ENCODE measurements at regions of chr9 and their contacts with region 1.

Region 1: DNA sequence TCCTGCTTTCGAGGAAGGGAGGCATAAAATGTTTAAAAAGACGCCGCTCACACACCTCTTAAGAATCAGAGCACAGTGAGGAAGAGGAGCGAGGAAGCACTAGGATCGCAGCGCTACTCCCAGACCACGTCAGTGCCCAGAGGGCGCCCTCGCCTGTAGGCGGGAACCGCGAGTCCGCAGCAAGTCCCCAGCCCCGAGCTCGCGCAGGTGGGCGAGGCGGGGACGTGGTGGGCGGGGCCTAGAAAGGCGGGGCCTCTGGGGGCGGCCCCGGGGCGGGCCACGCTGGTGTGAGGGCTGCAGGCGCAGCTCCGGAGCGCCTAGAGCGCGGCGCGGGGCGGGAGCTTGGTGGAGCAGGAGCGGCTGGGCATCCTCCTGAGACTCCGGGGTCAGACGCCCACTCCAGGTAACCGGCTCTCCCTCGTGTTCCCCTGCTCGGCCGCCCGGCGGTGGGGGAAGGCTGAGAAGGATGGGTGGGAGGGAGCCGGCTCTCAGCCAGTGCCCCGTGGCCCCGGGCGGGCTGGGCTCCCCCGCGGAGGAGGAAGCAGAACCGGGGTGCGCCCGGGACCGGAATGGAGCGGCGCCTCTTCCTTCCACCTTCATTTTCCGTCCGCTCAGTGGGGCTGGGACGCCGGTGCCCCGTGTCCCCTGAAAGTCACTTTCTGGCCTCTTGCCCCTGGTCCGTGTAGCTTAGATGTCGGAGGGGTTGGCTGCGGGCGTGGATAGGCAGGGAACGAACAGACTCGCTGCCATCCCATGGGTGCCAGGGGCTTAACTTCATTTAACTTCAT is at the start of gene GCNT1:
- DNase-seq: peak; percentile 95
- CTCF ChIP-seq: peak; percentile 57

Region 2: DNA sequence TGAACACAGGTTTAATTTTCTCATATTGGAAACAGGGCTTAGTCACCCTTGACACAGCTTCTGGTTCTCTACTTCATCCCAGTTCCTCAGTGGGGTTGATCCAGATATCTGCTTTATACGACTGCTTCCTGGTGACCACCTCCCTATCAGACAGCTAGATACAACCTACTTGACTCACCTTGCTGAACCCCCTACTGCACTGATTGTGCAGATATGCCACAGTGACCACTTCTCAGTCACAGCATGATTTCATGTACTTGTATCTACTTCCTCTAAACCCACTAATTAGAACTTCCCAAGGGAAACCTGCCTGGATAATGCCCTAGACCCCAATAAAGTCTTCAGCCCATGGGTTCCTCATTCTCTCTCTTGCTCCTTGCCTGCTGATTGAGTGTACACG is 46.5 kb before region 1 on chr9:
- CTCF ChIA-PET with region 1: no interaction called
- POLR2A ChIA-PET with region 1: no interaction called
- DNase-seq: no peak
- CTCF ChIP-seq: no peak

Region 3: GRCh38 chr9:76475686-76476085 is 16.6 kb after region 1 on chr9:
- CTCF ChIA-PET with region 1: interaction called, 24 read pairs
- POLR2A ChIA-PET with region 1: interaction called, 4 read pairs
- DNase-seq: no peak
- CTCF ChIP-seq: no peak

Region 4: GRCh38 chr9:76562511-76562911 is 103.4 kb after region 1 on chr9:
- CTCF ChIA-PET with region 1: no interaction called
- POLR2A ChIA-PET with region 1: no interaction called
- DNase-seq: peak; percentile 46
- CTCF ChIP-seq: no peak